SK-N-SH (cell line): ENCODE measurements at regions of chr1 and their contacts with region 1.

Region 1: GRCh38 chr1:941588-942383 is 17.3 kb downstream of the NOC2L start:
- DNase-seq: peak; percentile 90
- H3K4me3 ChIP-seq: peak overlapping the region in 1 of 2 experiments; percentile 38; a peak in 2 of 4 replicates
- H3K27ac ChIP-seq: peak overlapping the region in 1 of 2 experiments; percentile 75; a peak in 2 of 4 replicates
- H3K4me1 ChIP-seq: peaks cover 0 to 61% of the 10 kb centered on the region in 2 experiments; a peak in 1 of 4 replicates
- H3K27me3 ChIP-seq: no peaks in the 10 kb centered on the region
- CTCF ChIP-seq: no peak
- EP300 ChIP-seq: no peak
- RAD21 ChIP-seq: no peak

Region 2: DNA sequence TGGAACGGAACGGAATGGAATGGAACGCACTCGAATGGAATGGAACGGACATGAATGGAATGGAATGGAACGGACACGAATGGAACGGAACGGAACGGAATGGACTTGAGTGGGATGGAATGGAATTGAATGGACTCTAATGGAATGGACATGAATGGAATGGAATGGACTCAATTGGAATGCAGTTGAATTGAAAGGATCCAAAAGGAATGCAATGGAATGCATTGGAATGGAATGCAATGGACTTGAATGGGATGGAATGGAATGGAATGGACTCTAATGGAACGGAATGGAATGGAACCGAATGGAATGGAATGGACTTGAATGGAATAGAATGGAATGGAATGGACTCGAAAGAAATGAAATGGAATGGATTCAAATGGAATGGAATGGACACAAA is 153.0 kb before region 1 on chr1:
- CTCF ChIA-PET with region 1: no interaction called
- POLR2A ChIA-PET with region 1: no interaction called
- DNase-seq: no peak
- H3K4me3 ChIP-seq: no peak overlapping the region
- H3K27ac ChIP-seq: no peak overlapping the region
- H3K4me1 ChIP-seq: no peaks in the 10 kb centered on the region
- H3K27me3 ChIP-seq: no peaks in the 10 kb centered on the region
- CTCF ChIP-seq: no peak
- EP300 ChIP-seq: no peak
- RAD21 ChIP-seq: no peak

Region 3: DNA sequence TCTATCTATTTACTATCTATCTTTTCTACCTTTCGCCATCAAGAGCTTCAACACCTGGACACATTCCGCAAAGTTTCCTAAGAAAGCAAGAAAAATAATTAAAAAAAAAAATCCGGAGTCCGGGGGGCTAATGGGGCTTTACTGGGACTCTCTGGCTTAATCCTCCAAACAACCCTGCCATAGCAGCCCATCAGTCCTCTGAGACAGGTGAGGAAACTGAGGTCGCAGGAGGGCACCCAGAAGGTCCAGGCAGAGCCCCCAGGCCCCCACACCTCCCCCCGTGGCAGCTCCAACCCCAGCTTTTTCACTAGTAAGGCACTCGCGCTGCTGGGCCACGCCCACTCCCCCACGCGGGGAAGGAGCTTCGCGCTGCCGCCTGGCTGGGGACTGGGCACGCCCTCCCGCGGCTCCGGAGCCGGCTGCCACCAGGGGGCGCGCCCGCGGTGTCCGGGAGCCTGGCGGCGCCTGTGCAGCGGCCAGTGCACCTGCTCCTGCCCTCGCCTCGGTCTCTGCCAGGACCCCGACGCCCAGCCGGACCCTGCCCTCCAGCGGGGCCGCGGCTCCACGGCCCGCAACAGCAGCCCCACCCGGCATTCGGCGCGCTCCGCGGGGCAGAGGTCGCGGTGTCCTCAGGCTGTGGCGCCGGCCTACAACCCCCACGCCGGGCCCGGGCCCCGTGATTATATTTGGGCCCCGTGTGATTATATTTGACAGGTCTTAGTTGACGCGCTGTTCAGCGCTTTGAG is 72.1 kb before region 1 on chr1:
- CTCF ChIA-PET with region 1: interaction called, 18 read pairs
- POLR2A ChIA-PET with region 1: no interaction called
- DNase-seq: peak; percentile 90
- H3K4me3 ChIP-seq: no peak overlapping the region
- H3K27ac ChIP-seq: no peak overlapping the region
- H3K4me1 ChIP-seq: no peaks in the 10 kb centered on the region; a peak in 1 of 4 replicates
- H3K27me3 ChIP-seq: no peaks in the 10 kb centered on the region; the same call in 1 of the 2 replicates
- CTCF ChIP-seq: peak; percentile 56
- EP300 ChIP-seq: no peak
- RAD21 ChIP-seq: peak; percentile 56

Region 4: GRCh38 chr1:904310-904950 is 37.4 kb before region 1 on chr1:
- CTCF ChIA-PET with region 1: interaction called, 125 read pairs
- POLR2A ChIA-PET with region 1: interaction called, 13 read pairs
- DNase-seq: peak; percentile 93
- H3K4me3 ChIP-seq: peak overlapping the region; percentile 42 to 44; a peak in 3 of 4 replicates
- H3K27ac ChIP-seq: no peak overlapping the region; a peak in 1 of 4 replicates
- H3K4me1 ChIP-seq: peaks cover 0 to 18% of the 10 kb centered on the region in 2 experiments; a peak in 1 of 4 replicates
- H3K27me3 ChIP-seq: no peaks in the 10 kb centered on the region
- CTCF ChIP-seq: peak; percentile 62
- EP300 ChIP-seq: no peak
- RAD21 ChIP-seq: peak; percentile 82

Region 5: GRCh38 chr1:912740-913301 is 29.0 kb before region 1 on chr1:
- CTCF ChIA-PET with region 1: interaction called, 61 read pairs
- POLR2A ChIA-PET with region 1: interaction called, 9 read pairs
- DNase-seq: no peak
- H3K4me3 ChIP-seq: no peak overlapping the region
- H3K27ac ChIP-seq: no peak overlapping the region
- H3K4me1 ChIP-seq: peaks cover 0 to 32% of the 10 kb centered on the region in 2 experiments; a peak in 2 of 4 replicates
- H3K27me3 ChIP-seq: no peaks in the 10 kb centered on the region
- CTCF ChIP-seq: no peak
- EP300 ChIP-seq: no peak
- RAD21 ChIP-seq: no peak

Region 6: DNA sequence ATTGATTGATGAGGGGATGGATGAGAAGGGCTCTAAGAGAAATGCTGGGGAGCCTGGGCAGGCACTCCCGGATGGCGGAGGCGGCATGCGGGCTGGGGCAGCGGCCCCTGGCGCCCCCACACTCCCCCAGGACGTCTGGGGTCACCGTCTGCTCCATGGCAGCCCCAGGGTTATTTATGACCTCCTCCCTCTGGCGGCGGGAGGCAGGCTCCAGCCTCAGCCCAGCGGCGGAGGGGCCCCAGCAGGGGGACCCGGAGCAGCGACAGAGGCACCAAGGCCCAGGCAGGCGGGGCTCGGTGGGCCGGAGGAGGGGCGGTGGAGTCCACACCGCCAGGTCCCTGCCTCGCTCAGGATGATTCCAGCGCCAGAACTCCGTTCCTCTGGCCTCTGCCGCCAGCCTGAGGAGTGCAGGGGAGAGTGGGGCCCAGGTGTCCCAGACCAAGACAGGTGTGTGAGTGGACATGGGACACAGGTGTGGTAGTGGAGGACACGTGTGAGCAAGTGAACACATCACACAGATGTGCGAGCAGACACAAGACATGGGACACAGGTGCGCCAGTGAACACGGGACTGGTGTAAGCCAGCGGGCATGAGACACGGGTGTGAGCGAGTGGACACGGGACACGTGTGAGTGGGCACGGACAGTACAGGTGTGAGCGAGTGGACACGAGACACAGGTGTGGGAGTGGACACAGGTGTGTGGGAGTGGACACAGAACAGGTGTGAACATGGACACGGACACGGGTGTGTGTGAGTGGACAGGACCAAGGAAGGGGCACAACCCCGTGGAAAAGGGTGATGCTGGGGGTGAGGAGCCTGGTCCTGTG is 20.6 kb before region 1 on chr1:
- CTCF ChIA-PET with region 1: interaction called, 61 read pairs
- POLR2A ChIA-PET with region 1: interaction called, 9 read pairs
- DNase-seq: peak; percentile 92
- H3K4me3 ChIP-seq: peak overlapping the region; percentile 9 to 24; a peak in 2 of 4 replicates
- H3K27ac ChIP-seq: peak overlapping the region in 1 of 2 experiments; percentile 55; a peak in 2 of 4 replicates
- H3K4me1 ChIP-seq: peaks cover 8 to 68% of the 10 kb centered on the region in 2 experiments; a peak in 2 of 4 replicates
- H3K27me3 ChIP-seq: no peaks in the 10 kb centered on the region
- CTCF ChIP-seq: peak; percentile 38
- EP300 ChIP-seq: peak; percentile 46 to 64; a peak in 3 of 4 replicates
- RAD21 ChIP-seq: peak; percentile 2; the same call in 1 of the 2 replicates

Region 7: GRCh38 chr1:958823-959729 is 17.3 kb after region 1 on chr1 and contains the start of gene NOC2L:
- CTCF ChIA-PET with region 1: interaction called, 14 read pairs
- POLR2A ChIA-PET with region 1: interaction called, 3 read pairs
- DNase-seq: peak; percentile 95
- H3K4me3 ChIP-seq: peak within 1 kb of the TSS; percentile 74 to 91
- H3K27ac ChIP-seq: peak within 1 kb of the TSS in 1 of 2 experiments; percentile 47; a peak in 1 of 4 replicates
- H3K4me1 ChIP-seq: peaks cover 4 to 17% of the 10 kb centered on the region in 2 experiments; a peak in 2 of 4 replicates
- H3K27me3 ChIP-seq: no peaks in the 10 kb centered on the region
- CTCF ChIP-seq: no peak
- EP300 ChIP-seq: no peak
- RAD21 ChIP-seq: no peak
- polyA plus RNA-seq, gene NOC2L: 114 and 124 TPM in 2 replicates